A549 (cell line): ENCODE measurements at regions of chr5 and their contacts with region 1.

Region 1: DNA sequence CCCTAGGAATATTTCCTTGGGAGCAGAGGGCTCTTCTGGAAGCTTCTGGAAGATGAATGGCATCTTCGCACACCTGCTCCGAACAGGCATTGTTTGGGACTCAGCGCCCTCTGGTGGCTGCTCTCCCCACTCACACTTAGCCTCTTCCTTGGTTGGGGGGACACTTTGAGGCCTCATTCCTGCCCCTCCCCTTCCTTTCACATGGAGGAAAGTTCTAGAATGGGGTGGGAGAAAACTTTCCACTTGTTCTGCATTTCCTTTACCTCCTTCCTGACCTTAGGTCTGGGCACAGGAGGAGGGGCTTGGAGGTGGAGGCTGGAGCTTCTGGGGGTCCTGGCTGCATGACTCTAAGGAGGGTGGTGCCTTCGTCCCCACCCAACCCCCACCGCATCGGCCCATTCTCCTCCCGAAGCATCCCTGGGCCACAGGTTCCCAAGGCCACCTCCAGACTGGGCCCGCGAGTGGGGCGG is 19.3 kb upstream of the SMIM32 start:
- DNase-seq: peak; percentile 50 to 61
- ATAC-seq: peak in 1 of 2 experiments; percentile 74; a peak in 3 of 6 replicates
- H3K4me3 ChIP-seq: no peak overlapping the region
- H3K27ac ChIP-seq: no peak overlapping the region
- H3K4me1 ChIP-seq: no peaks in the 10 kb centered on the region
- CTCF ChIP-seq: peak; percentile 83
- EP300 ChIP-seq: no peak
- POLR2A ChIP-seq: no peak
- RAD21 ChIP-seq: peak; percentile 79 to 80

Region 2: DNA sequence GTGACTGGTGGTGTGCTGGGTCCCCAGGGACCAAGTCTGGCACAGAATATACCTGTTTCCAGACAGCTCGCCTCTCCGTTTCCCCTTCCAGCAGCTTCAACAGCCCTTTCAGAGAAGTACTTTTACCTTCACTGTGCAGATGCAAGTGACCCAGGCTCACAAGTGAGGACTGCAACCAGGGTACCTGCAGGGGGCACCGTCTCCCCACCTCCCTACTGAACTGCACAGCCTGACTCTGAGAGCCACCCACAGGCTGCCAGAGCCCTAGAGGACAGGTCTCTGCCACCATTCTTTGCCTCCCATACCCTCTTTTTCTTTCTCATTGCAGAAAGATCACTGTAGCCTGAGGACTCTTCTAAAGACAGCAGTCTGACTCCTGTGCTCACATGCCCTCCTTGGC is 332.0 kb before region 1 on chr5:
- CTCF ChIA-PET with region 1: interaction called, 37 read pairs
- POLR2A ChIA-PET with region 1: no interaction called
- DNase-seq: peak; percentile 55 to 68
- ATAC-seq: peak; percentile 76 to 95
- H3K4me3 ChIP-seq: no peak overlapping the region
- H3K27ac ChIP-seq: peak overlapping the region in 1 of 2 experiments; percentile 40; a peak in 1 of 6 replicates
- H3K4me1 ChIP-seq: peaks cover 11% of the 10 kb centered on the region
- CTCF ChIP-seq: peak; percentile 56
- EP300 ChIP-seq: no peak
- POLR2A ChIP-seq: no peak
- RAD21 ChIP-seq: peak; percentile 58 to 82

Region 3: DNA sequence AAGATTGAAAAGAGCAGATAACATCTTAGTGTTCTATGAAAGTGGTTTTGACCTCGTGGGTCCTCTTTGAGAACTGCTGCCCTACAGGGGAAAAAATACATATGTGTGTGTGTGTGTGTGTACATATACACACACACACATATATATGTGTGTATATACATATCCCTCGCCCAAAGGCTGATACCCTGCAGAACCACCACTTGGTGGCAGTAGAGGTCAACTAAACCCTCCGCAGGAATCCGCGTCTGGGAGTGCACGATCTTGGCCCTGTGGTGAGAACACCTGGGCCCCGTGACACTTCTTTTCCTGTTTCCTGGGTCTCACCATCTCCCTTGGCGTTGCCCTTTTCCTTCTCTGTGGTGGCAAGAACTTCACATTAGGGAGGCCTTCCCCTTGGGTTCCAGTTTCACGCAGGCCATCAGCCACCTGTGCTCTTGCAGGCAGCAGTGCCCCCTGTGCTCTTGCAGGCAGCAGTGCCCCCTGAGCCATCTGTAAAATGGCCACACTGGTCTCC is 324.9 kb before region 1 on chr5:
- CTCF ChIA-PET with region 1: interaction called, 41 read pairs
- POLR2A ChIA-PET with region 1: no interaction called
- DNase-seq: peak; percentile 74 to 78
- ATAC-seq: peak; percentile 92 to 97
- H3K4me3 ChIP-seq: no peak overlapping the region
- H3K27ac ChIP-seq: peak overlapping the region; percentile 9 to 65; a peak in 4 of 6 replicates
- H3K4me1 ChIP-seq: peaks cover 22% of the 10 kb centered on the region
- CTCF ChIP-seq: peak; percentile 98
- EP300 ChIP-seq: no peak
- POLR2A ChIP-seq: no peak
- RAD21 ChIP-seq: peak; percentile 97 to 98

Region 4: GRCh38 chr5:136192526-136193321 is 19.6 kb before region 1 on chr5 and contains the start of gene SMIM32:
- CTCF ChIA-PET with region 1: interaction called, 16 read pairs
- POLR2A ChIA-PET with region 1: no interaction called
- DNase-seq: no peak
- ATAC-seq: no peak
- H3K4me3 ChIP-seq: no peak within 1 kb of the TSS
- H3K27ac ChIP-seq: no peak within 1 kb of the TSS
- H3K4me1 ChIP-seq: no peaks in the 10 kb centered on the region
- CTCF ChIP-seq: no peak
- EP300 ChIP-seq: no peak
- POLR2A ChIP-seq: no peak
- RAD21 ChIP-seq: no peak
- polyA plus RNA-seq, gene SMIM32: not detected in 2 replicates

Region 5: DNA sequence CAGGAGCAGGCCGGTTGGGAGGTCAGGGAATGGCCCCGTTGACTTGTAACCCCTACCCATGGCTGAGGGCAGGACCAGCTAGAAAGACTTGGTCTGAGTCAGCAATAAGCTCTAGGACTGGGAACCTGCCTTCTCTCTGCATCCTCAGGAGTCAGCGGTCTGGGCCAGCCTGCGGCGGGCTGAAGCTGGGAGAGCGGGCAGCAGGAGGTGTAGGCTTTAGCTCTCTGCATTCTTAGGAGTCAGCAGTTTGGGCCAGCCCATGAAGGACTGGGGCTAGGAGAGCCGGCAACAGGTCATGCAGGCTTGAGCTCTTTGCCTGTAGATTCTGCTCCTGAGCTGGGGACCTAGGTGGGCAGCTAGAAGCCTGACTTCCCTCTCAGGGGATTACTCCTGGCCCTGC is 12.9 kb before region 1 on chr5:
- CTCF ChIA-PET with region 1: interaction called, 21 read pairs
- POLR2A ChIA-PET with region 1: no interaction called
- DNase-seq: no peak
- ATAC-seq: no peak
- H3K4me3 ChIP-seq: no peak overlapping the region
- H3K27ac ChIP-seq: no peak overlapping the region
- H3K4me1 ChIP-seq: no peaks in the 10 kb centered on the region
- CTCF ChIP-seq: no peak
- EP300 ChIP-seq: no peak
- POLR2A ChIP-seq: no peak
- RAD21 ChIP-seq: no peak

Region 6: DNA sequence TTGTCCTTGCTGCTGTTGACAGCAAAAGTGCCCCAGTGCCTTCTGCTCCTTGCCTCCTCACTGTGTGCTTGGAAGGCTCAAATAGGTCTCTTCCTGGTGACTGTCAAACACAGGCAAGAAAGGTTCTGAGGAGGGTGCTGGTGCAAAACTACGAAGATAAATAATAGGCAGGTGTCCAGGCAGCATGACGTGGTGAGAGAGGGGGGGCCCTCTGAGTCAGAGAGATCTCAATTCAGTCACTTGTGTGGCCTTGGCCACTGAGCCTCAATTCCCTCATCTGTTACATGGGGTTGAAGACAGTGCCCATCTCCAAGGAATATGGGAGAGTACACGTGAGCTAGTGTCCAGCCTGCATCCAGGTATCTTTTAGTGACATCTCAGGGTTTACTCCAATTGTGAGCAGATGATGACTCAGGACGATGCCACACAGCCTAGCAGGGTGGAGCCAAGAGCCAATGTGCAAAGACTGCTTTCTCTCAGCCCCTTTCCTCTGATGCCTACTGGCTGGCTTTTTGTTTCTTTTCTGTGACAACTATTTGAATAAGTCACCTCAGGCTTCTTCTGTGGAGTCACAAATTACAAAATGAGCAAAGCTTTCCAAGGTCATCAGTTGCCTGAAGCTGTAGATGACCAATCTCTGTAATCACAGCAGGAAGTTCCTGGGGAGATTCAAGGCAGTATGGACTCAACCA is 10.4 kb after region 1 on chr5:
- CTCF ChIA-PET with region 1: interaction called, 37 read pairs
- POLR2A ChIA-PET with region 1: no interaction called
- DNase-seq: no peak
- ATAC-seq: peak in 1 of 2 experiments; percentile 19; a peak in 3 of 6 replicates
- H3K4me3 ChIP-seq: no peak overlapping the region
- H3K27ac ChIP-seq: no peak overlapping the region
- H3K4me1 ChIP-seq: no peaks in the 10 kb centered on the region
- CTCF ChIP-seq: no peak
- EP300 ChIP-seq: no peak
- POLR2A ChIP-seq: no peak
- RAD21 ChIP-seq: no peak

Region 7: DNA sequence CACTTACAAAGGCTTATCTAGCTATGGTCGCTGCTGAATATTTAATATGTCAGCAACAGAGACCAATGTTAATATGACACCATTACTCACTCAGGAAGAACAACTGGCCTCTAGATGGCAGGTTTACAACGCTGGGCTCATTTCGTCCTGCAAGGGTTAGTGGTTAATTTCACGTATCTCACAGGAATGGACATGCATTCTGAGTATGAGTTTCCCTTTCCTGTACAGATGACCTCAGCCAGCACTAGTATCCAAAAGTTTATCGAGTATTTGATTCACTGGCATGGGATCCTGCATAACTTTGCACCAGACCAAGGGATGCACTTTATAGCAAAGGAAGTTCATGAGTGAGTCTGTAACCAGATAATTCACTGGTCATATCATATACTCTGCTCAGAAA is 161.7 kb after region 1 on chr5:
- CTCF ChIA-PET with region 1: no interaction called
- POLR2A ChIA-PET with region 1: no interaction called
- DNase-seq: peak in 1 of 2 experiments; percentile 30
- ATAC-seq: peak; percentile 56 to 75; a peak in 4 of 6 replicates
- H3K4me3 ChIP-seq: no peak overlapping the region
- H3K27ac ChIP-seq: no peak overlapping the region
- H3K4me1 ChIP-seq: no peaks in the 10 kb centered on the region
- CTCF ChIP-seq: peak; percentile 37
- EP300 ChIP-seq: no peak
- POLR2A ChIP-seq: no peak
- RAD21 ChIP-seq: peak; percentile 34 to 65; a peak in 4 of 5 replicates